ENCODE measurements at regions of chr12 and their contacts with region 1.

Region 1: DNA sequence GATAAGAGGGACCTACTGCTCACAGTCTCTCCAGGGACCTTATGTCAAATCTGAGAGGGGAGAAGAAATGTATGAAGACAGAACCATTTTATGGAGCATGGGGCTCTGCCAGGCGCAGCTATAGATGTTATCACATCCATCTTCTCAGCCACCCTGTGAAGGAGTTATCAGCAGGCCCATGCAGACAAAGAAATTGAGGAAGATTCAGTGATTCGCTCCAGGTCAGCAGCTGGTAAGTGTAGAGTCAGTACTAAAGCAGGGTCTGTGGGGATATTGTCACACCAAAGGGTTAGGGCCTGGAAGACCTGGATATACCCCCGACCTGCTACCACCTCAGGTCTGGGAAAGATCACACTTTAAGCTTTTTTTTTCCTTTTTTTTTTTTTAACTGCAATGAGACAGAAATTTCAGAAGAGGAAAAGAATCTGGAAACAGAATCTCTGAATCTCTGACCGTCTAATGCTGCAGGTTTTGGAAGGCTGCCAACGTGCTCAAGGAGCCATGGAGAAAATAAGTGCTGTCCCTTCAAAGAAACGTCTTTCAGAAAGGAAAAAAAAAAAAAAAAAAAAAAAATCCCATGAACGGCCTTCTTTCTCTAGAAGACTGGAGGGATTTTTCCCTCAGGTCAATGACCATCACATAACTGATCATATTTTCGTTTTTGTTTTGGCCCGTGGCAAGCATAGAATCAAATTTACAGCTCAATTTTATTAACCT is 73.3 kb upstream of the PLEKHG7 start:
- DNase-seq: no peak
- H3K4me3 Mint-ChIP-seq: no peak overlapping the region
- H3K27ac Mint-ChIP-seq: no peak overlapping the region
- H3K4me1 Mint-ChIP-seq: peaks cover 5% of the 10 kb centered on the region
- H3K27me3 Mint-ChIP-seq: no peaks in the 10 kb centered on the region
- CTCF ChIP-seq: no peak

Region 2: DNA sequence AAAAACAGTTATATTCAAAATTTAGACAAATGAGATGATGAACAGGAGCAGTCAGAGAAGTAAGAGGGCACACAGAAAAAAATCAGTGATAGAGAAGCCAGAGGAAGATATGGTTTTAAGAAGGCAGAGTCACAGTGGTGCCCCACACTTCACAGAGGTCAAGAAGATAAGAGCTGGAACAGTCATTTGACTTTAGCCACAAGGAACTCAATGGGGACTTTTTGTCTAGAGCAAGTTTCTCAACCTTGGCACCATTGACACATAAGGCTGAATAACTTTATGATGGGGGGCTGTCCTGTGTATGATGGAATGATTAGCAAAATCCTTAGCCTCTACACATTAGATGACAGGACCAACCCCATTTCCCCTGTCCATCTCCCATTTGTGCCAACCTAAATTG is 99.6 kb before region 1 on chr12:
- CTCF ChIA-PET with region 1: no interaction called
- intact Hi-C with region 1: no loop called
- DNase-seq: no peak
- H3K4me3 Mint-ChIP-seq: no peak overlapping the region
- H3K27ac Mint-ChIP-seq: no peak overlapping the region
- H3K4me1 Mint-ChIP-seq: peaks cover 10% of the 10 kb centered on the region
- H3K27me3 Mint-ChIP-seq: no peaks in the 10 kb centered on the region
- CTCF ChIP-seq: no peak

Region 3: DNA sequence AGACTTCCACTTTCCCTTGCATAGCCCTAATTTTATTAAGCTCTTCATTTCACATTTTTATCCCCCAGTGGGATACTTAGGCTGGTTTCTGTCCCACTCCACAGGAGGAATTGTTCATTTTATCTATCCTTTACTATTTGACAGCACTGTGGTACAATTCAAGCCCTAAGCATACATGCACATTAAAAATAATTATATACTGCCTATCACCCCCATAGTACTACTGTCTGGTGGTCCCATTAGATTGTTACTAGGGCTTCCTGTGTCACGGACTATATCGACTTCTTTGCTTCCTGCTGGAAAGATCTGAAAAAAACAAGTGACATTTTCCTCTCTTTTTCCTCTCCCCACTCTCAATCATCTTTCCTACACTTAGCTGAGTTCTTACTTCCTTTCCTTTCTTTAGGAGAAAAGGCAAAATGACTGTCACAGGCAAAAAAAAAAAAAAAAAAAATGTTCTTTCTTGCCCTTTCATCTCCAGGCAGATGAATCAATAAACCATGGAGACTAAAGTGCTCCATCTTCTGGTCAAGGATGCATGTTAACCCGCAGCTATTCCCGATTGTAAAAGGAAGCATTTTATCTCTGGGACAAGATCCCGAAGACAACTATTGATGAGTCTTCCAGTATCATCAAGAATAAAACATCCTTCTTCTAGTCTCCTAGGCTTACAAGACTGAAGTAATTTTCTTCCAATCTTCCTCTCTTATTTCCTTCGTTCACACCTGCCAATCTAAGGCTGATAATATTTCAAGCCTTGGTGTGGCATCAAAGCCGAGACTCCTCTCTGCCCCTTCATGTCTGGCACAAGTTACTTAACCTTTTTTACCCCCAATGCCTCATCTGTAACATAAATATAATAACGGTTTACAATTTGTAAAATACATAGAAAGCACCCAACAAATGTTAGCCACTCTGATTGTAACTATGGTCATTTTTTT is 21.1 kb before region 1 on chr12:
- CTCF ChIA-PET with region 1: no interaction called
- intact Hi-C with region 1: no loop called
- DNase-seq: peak; percentile 13
- H3K4me3 Mint-ChIP-seq: no peak overlapping the region
- H3K27ac Mint-ChIP-seq: peak overlapping the region; percentile 65
- H3K4me1 Mint-ChIP-seq: peaks cover 37% of the 10 kb centered on the region
- H3K27me3 Mint-ChIP-seq: no peaks in the 10 kb centered on the region
- CTCF ChIP-seq: peak; percentile 34

Region 4: DNA sequence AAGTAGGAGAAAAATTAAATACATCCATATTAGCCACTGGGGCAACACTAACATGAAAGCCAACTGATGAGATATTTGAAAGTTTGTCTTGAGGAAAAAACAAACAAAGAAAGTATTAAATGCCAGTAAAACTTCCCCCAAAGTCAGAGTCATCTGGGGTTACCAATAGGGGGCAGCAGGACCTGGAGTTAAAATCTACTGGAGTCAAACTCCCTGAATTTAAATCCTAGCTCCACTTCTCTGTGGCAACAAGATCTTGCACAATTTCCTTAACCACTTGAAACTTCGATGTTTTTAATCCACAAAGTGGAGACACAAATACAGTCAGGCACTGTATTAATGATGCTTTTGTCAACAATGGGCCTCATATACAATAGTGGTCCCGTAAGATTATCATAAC is 87.7 kb after region 1 on chr12:
- CTCF ChIA-PET with region 1: no interaction called
- intact Hi-C with region 1: no loop called
- DNase-seq: peak; percentile 12
- H3K4me3 Mint-ChIP-seq: no peak overlapping the region
- H3K27ac Mint-ChIP-seq: no peak overlapping the region
- H3K4me1 Mint-ChIP-seq: no peaks in the 10 kb centered on the region
- H3K27me3 Mint-ChIP-seq: no peaks in the 10 kb centered on the region
- CTCF ChIP-seq: no peak

Region 5: DNA sequence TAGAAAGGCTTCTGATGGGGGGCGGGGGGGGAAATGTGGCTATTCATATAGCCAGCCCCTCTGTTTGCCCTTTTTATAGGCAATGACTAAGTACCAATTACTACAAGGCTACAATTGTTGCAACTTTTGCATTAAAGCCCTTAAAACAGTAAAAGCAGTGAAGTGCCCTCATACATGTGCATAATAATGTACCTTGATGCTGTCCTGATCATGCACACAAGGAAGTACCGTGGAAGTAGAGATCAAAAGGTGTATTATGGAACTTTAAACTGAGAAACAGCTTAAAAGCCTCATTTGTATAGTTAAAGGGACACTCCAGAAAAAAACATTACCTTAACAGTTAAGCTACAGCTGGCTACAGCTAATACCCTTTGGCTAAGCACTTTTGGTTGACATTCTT is 185.1 kb after region 1 on chr12:
- CTCF ChIA-PET with region 1: interaction called, 11 read pairs
- intact Hi-C with region 1: no loop called
- DNase-seq: no peak
- H3K4me3 Mint-ChIP-seq: no peak overlapping the region
- H3K27ac Mint-ChIP-seq: no peak overlapping the region
- H3K4me1 Mint-ChIP-seq: no peaks in the 10 kb centered on the region
- H3K27me3 Mint-ChIP-seq: no peaks in the 10 kb centered on the region
- CTCF ChIP-seq: no peak